Body of pancreas (tissue), 4 donors: ENCODE measurements at regions of chrX and their contacts with region 1.

Region 1: DNA sequence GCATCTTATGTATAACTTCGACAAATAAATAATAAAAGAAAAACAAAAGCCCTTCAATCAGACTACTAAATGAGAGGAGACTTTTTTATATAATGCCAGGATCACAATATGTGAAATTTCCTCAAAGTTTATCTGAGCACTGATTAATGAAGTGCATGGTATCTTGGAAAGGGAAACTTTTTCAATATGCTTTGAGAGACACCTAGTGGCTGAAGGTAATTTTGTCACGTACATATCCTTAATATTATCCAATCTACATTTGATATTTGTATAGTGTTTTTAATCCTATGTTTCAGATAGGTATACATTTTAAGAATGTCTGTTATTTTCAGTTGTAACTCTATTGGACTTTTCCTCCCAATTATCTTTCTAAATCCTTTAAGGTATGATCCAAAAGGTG is 146.8 kb downstream of the KLHL4 start:
- DNase-seq: no peak
- ATAC-seq: no peak
- H3K4me3 ChIP-seq: no peak overlapping the region
- H3K27ac ChIP-seq: no peak overlapping the region
- H3K4me1 ChIP-seq: no peaks in the 10 kb centered on the region
- H3K27me3 ChIP-seq: no peaks in the 10 kb centered on the region
- CTCF ChIP-seq: peak in 6 of 7 experiments; percentile 23 to 59 (median 40)
- POLR2A ChIP-seq: no peak

Region 2: GRCh38 chrX:87339958-87340357 is 324.4 kb before region 1 on chrX:
- intact Hi-C with region 1: loop called (anchors 10 kb)
- DNase-seq: no peak
- ATAC-seq: no peak
- H3K4me3 ChIP-seq: no peak overlapping the region
- H3K27ac ChIP-seq: no peak overlapping the region
- H3K4me1 ChIP-seq: no peaks in the 10 kb centered on the region
- H3K27me3 ChIP-seq: no peaks in the 10 kb centered on the region
- CTCF ChIP-seq: no peak
- POLR2A ChIP-seq: no peak